ENCODE measurements at regions of chr3 and their contacts with region 1.

Region 1: DNA sequence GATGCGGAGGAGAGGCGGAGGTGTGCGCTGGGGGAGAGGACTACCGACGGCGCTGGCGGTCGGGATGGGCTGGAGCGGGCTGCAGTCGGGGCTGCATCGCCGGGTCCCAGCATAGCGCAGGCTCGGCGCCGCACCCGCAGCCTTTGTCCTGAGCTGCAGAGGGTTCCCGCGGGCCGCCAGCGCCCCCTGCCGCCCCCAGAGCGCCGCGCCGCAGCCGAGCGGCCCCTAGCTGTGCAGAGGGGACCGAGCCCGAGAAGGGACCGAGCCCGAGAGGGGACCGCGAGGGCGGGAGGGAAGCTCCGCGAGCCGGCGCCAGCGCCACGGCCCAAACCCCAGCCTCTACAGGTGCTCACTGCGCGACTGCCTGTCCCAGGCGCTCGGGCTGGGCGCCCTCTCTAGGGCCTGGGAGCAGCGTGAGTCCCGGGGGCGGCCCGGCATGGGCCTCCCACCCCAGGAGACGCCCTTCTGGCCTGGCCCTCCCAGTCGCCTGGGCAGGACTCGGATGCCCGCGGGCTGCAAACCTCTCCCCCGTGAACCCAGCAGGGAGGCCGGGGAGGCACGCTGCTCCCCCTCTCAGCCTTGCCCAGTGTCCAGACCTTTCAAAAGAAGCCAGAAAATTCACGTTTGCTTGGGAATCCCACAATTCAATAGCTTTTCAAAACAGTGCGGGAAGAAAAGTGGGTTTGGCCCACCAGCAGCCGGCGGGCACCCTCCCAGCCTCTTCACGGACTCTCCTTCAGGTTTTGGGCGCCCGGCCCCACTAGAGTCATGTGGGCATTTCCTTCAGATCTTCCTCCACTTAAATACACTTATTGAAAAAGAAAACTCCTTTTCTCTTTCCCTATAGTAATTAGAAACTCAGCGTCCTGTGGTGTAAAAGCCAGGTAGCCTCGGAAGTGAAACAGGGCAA is 134.7 kb downstream of the TPRA1 start:
- DNase-seq: peak; percentile 21
- H3K4me3 ChIP-seq: no peak overlapping the region
- H3K27ac ChIP-seq: no peak overlapping the region
- H3K4me1 ChIP-seq: no peaks in the 10 kb centered on the region
- CTCF ChIP-seq: peak; percentile 81

Region 2: GRCh38 chr3:126679318-126679751 is 776.5 kb before region 1 on chr3:
- CTCF ChIA-PET with region 1: no interaction called
- POLR2A ChIA-PET with region 1: no interaction called
- intact Hi-C with region 1: loop called (anchors 5 kb)
- DNase-seq: peak; percentile 74
- H3K4me3 ChIP-seq: peak overlapping the region; percentile 34
- H3K27ac ChIP-seq: peak overlapping the region; percentile 38
- H3K4me1 ChIP-seq: peaks cover 27% of the 10 kb centered on the region
- CTCF ChIP-seq: peak; percentile 88

Region 3: DNA sequence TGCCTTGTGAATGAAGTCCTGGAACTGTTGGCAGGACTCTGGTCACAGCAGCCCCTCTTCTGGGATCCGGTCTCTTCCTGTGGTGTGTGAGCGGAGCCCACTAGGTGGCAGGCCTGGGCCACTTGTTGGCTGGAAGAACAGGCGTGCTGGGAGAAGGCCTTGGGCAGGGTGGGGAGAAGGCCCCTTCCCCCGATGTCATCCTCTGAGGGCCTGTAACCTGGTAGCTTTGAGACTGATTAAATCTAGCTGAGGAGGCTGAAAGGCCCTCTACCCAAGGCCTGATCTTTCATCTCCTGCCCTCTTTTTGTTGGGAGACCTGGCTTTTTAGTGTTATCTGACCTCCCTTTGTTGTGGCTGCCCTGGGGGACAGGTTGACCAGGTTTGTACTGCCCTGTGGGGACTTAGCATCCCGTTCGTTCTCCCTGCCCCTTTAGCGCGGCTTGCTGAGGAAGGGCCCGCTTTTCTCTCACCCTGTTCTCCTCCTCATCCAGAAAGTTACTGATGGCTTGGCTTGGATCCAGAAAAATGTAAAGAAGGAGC is 703.4 kb before region 1 on chr3:
- CTCF ChIA-PET with region 1: no interaction called
- POLR2A ChIA-PET with region 1: no interaction called
- intact Hi-C with region 1: loop called (anchors 2 kb)
- DNase-seq: peak; percentile 66
- H3K4me3 ChIP-seq: no peak overlapping the region
- H3K27ac ChIP-seq: no peak overlapping the region
- H3K4me1 ChIP-seq: no peaks in the 10 kb centered on the region
- CTCF ChIP-seq: peak; percentile 86

Measured in OCI-LY7 (cell line).